ENCODE measurements at regions of chr11 and their contacts with region 1.

Region 1: DNA sequence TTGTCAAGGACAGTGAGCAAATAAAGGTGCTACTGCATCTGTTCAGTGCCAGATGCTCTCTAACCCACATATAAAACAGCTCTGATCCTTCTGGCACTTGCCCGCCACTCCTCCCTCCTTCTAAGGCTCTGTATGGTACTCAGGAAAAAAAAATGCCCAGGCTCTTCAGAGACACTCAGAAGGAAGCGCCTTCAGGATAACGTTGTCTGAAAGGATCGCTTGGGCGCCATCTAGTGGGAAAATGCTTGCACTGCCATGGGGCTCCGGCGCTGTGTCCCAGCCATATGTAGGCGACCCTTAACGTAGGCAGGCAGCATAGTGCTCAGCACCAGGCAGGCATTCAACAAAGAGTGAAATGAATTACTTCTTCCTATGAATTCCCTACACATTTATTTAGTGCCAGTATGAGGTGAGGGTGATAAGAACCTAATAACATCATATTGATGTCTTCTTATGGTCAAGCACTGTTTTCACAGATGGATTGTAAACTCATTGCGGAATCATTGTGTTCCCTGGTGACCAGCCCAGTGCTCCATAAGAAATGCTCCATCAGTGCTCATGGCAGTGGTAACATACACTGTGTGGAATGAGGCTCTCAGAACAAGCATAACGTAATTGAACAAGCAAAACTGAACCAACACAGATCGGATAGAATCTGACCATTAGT is 39.6 kb downstream of the PAMR1 start:
- DNase-seq: peak; percentile 58
- H3K4me3 ChIP-seq: no peak overlapping the region
- H3K27ac ChIP-seq: no peak overlapping the region
- H3K4me1 ChIP-seq: no peaks in the 10 kb centered on the region
- H3K27me3 ChIP-seq: no peaks in the 10 kb centered on the region
- CTCF ChIP-seq: peak; percentile 93 to 94

Region 2: GRCh38 chr11:34926101-34926830 is 559.5 kb before region 1 on chr11:
- CTCF ChIA-PET with region 1: no interaction called
- dilution Hi-C with region 1: no loop called
- in situ Hi-C with region 1: no loop called
- intact Hi-C with region 1: loop called (anchors 1 kb)
- DNase-seq: peak; percentile 36
- H3K4me3 ChIP-seq: no peak overlapping the region
- H3K27ac ChIP-seq: no peak overlapping the region
- H3K4me1 ChIP-seq: peaks cover 4% of the 10 kb centered on the region
- H3K27me3 ChIP-seq: no peaks in the 10 kb centered on the region
- CTCF ChIP-seq: peak; percentile 63 to 66

Region 3: DNA sequence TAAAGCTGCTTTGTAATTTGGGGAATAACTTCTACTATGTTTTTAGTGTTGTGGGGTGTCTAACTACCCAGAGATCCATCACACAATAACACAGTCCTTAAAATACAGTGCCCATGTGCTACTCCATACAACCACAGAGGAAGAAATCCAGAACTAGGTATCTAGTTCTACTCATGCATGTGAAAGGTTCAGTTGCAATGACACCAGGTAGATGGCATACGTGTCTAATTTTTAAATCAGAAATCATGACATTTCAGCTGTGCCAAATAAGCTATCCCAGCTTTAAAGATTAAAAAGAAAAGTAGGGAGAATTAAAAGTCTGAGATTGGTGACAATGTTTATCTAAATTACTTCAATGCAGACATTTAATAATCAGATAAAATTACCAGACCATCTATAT is 224.6 kb before region 1 on chr11:
- CTCF ChIA-PET with region 1: no interaction called
- dilution Hi-C with region 1: no loop called
- in situ Hi-C with region 1: no loop called
- intact Hi-C with region 1: loop called (anchors 1 kb)
- DNase-seq: no peak
- H3K4me3 ChIP-seq: no peak overlapping the region
- H3K27ac ChIP-seq: no peak overlapping the region
- H3K4me1 ChIP-seq: no peaks in the 10 kb centered on the region
- H3K27me3 ChIP-seq: no peaks in the 10 kb centered on the region
- CTCF ChIP-seq: peak in 1 of 2 donors; percentile 26

Region 4: DNA sequence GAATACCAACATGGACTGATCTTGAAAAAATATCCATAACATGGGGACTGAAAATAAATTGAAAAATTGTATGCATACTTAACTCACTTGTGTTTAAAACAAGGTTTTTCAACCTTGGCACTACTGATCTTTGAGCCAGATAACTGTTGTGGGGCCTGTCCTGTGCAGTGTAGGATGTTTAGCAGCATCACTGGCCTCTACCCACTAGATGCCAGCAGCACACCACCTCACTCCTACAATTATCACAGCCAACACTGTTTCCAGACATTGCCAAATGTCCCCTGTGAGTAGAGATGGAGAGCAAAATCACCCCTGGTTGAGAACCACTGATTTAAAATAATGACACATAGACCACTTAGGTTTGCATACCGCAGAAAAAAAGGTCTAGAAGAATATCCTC is 21.5 kb before region 1 on chr11:
- CTCF ChIA-PET with region 1: no interaction called
- dilution Hi-C with region 1: no loop called
- in situ Hi-C with region 1: no loop called
- intact Hi-C with region 1: loop called (anchors 1 kb)
- DNase-seq: peak; percentile 12
- H3K4me3 ChIP-seq: no peak overlapping the region
- H3K27ac ChIP-seq: no peak overlapping the region
- H3K4me1 ChIP-seq: no peaks in the 10 kb centered on the region
- H3K27me3 ChIP-seq: no peaks in the 10 kb centered on the region
- CTCF ChIP-seq: peak in 1 of 2 donors; percentile 47

Region 5: GRCh38 chr11:35714882-35715627 is 229.3 kb after region 1 on chr11:
- CTCF ChIA-PET with region 1: no interaction called
- dilution Hi-C with region 1: no loop called
- in situ Hi-C with region 1: no loop called
- intact Hi-C with region 1: loop called (anchors 5 kb)
- DNase-seq: peak; percentile 32
- H3K4me3 ChIP-seq: no peak overlapping the region
- H3K27ac ChIP-seq: no peak overlapping the region
- H3K4me1 ChIP-seq: no peaks in the 10 kb centered on the region
- H3K27me3 ChIP-seq: no peaks in the 10 kb centered on the region
- CTCF ChIP-seq: no peak

Region 6: DNA sequence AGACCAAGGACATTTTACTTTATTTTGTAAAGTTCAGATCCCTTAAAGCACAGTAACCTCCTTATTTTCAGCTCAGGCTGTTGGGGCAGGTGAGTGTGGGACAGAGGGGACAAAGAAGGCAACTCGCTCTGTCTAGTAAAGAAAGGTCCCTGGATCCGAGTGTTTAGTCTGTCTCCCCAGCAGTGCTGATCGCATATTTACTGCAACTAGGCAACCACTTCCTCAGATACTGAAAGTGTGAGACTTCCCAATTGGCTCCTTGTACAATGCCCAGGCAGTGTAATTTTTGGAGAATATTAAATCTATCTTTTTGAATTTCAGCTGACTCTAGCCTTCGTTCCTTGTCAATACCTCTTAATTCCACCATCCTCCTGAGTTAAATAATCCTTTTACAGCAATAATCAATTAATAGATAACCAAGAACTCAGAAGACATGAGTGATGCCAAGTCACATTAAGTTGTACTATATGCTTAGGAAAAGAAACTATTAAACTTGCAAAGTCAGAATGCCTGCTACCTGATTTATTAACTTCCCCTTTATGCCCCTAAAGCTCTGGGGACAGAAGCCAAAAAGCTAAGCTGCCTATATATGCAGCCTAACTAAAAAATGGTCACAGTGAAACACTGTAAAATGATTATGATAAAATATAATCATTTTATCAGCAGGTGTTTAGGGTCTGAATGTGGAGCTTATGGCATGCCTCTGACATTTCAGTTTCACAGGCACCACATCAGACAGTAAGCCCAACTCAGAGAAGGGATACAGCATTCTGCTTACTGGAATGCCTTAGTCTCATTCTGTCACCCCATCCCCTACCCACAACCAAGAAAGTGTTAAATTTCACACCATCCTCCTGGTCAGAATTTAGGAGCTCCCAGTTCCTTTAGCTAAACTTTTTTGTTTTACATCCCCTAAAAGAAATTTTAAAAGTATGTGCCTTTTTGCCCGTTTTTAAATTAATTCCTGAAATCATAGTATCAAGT is 315.5 kb after region 1 on chr11:
- CTCF ChIA-PET with region 1: no interaction called
- dilution Hi-C with region 1: loop called (anchors 25 kb)
- in situ Hi-C with region 1: no loop called
- intact Hi-C with region 1: no loop called
- DNase-seq: no peak
- H3K4me3 ChIP-seq: no peak overlapping the region
- H3K27ac ChIP-seq: no peak overlapping the region
- H3K4me1 ChIP-seq: peaks cover 59% of the 10 kb centered on the region
- H3K27me3 ChIP-seq: no peaks in the 10 kb centered on the region
- CTCF ChIP-seq: no peak